ENCODE measurements at regions of chr9 and their contacts with region 1.

Region 1: GRCh38 chr9:2872257-2872935 is 28.5 kb upstream of the PUM3 start:
- DNase-seq: peak in 1 of 2 donors; percentile 8
- H3K4me3 ChIP-seq: no peak overlapping the region
- H3K27ac ChIP-seq: no peak overlapping the region
- H3K4me1 ChIP-seq: no peaks in the 10 kb centered on the region
- H3K27me3 ChIP-seq: no peaks in the 10 kb centered on the region
- CTCF ChIP-seq: peak in 3 of 6 experiments; percentile 31 to 55 (median 52)
- POLR2A ChIP-seq: no peak

Region 2: DNA sequence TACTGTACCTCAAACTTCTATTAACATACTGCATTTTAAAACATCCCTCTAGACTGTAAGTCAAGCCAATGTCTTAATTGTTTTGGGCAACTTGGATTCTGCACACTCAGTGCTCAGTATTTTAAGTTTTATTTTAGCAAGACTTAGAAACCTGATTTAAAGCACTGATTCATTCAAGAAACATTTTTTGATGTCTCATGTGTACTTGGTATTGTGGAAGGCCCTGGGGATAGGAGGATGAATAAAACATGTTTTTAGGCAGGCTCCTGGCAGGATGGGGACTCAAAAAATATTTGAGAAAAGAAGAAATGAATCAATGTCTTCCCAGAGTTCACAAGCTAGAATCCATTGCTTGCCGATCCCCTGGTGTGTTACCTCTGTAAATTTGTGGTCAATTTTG is 305.5 kb after region 1 on chr9:
- intact Hi-C with region 1: loop called (anchors 10 kb)
- DNase-seq: no peak
- H3K4me3 ChIP-seq: no peak overlapping the region
- H3K27ac ChIP-seq: no peak overlapping the region
- H3K4me1 ChIP-seq: peaks cover 0 to 9% of the 10 kb centered on the region in 2 donors
- H3K27me3 ChIP-seq: no peaks in the 10 kb centered on the region
- CTCF ChIP-seq: no peak
- POLR2A ChIP-seq: no peak

Measured in thyroid gland (tissue), 4 donors.